ENCODE measurements at regions of chr19 and their contacts with region 1.

Region 1: DNA sequence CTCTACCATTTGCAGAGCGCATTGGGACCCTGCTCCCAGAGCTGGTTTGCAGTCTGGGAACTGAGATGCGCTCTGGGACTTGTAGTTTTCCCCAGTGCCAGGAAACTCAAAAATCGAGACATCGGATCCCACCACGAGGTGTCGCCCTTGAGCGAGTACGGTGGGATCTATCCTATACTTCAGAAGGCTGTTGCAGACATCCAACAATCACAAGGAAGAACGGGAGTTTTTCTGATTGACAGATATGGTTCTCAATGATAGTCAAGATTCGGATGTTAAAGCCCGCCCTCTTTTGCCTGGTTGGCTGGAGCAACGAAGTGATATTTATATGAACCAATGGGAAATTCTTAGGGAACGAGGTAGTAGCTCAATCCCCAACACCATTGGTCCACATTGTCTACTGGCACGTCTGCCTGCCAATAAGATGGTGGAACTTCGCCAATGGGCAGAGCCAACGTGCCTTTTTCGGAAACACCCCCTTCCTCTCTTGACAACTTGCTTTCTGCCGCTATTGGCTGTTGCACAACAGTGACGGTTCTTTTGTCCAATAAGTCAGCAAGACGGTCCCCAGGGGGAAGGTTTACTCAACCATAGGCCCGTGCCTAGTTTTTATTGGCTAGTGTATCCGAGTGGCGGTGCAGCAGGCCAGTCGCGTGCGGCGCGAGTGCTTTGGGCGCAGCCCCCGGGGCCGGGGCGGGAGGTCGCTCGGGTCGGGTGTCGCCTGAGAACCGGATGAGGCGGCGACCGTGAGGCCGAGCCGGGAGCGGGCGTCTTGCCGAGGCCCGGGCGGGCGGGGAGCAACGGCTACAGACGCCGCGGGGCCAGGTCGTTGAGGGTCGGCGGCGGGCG is at the start of gene DNM2:
- DNase-seq: peak; percentile 92 to 99 (median 98)
- H3K4me3 ChIP-seq: peak within 1 kb of the TSS; percentile 76
- H3K4me3 Mint-ChIP-seq: peak within 1 kb of the TSS; percentile 88 to 99 (median 95)
- H3K27ac ChIP-seq: peak within 1 kb of the TSS; percentile 90
- H3K27ac Mint-ChIP-seq: peak within 1 kb of the TSS; percentile 83 to 99 (median 96)
- H3K4me1 ChIP-seq: peaks cover 36% of the 10 kb centered on the region
- H3K4me1 Mint-ChIP-seq: peaks cover 31 to 46% (median 42%) of the 10 kb centered on the region in 3 donors
- H3K27me3 ChIP-seq: no peaks in the 10 kb centered on the region
- H3K27me3 Mint-ChIP-seq: no peaks in the 10 kb centered on the region
- total RNA-seq, gene DNM2: 154 to 165 TPM

Region 2: DNA sequence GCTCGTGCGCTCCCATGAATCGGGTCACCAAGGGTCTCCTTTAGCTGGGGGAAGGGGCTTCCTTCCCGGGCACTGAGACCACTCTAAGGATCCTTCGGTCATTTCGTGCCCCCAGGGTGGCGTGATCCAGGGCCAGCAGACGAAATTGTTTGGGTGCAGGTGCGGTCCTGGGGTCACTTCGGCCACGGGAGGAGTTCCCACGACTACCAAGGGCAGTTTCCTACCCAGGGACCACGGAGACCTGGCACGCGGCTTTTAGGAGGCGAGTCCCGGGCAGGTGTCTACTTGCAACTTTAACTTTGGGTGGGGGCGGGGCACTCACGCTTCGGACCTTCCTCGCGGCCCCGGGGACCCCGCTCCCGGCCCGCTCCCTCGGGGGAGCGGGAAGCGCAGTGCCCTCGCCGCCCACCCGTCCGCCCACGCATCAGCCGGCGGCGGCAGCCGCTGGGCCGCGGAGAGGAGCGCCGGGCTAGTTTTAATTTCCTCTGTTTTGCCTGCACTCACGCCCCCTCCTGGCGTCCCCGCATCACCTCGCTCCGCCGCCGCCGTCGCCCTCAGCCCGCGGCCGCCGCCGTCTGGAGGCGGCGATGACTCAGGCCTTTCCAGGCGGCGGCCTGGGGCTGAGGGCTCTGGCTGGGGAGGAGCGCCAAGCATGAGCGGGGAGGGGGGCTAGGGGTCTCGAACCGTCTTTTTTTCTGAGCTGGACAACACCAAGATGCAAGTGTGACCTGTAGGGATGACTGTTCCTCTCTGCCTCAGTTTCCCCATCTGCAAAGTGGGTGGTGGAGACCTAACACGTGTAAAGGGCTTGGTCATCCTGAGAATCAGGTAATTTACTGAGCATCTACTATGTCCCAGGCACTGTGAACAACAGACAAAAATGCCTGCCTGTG is 803.0 kb before region 1 on chr19:
- CTCF ChIA-PET with region 1: no interaction called
- POLR2A ChIA-PET with region 1: no interaction called
- DNase-seq: peak; percentile 67 to 85 (median 74)
- H3K4me3 ChIP-seq: peak overlapping the region; percentile 69
- H3K4me3 Mint-ChIP-seq: peak overlapping the region in 6 of 7 donors; percentile 59 to 78 (median 76)
- H3K27ac ChIP-seq: peak overlapping the region; percentile 31
- H3K27ac Mint-ChIP-seq: peak overlapping the region in 2 of 8 donors; percentile 47 to 77
- H3K4me1 ChIP-seq: peaks cover 7% of the 10 kb centered on the region
- H3K4me1 Mint-ChIP-seq: peaks cover 5 to 12% (median 9%) of the 10 kb centered on the region in 3 donors
- H3K27me3 ChIP-seq: no peaks in the 10 kb centered on the region
- H3K27me3 Mint-ChIP-seq: peaks cover 18 to 36% of the 10 kb centered on the region in 2 donors

Region 3: DNA sequence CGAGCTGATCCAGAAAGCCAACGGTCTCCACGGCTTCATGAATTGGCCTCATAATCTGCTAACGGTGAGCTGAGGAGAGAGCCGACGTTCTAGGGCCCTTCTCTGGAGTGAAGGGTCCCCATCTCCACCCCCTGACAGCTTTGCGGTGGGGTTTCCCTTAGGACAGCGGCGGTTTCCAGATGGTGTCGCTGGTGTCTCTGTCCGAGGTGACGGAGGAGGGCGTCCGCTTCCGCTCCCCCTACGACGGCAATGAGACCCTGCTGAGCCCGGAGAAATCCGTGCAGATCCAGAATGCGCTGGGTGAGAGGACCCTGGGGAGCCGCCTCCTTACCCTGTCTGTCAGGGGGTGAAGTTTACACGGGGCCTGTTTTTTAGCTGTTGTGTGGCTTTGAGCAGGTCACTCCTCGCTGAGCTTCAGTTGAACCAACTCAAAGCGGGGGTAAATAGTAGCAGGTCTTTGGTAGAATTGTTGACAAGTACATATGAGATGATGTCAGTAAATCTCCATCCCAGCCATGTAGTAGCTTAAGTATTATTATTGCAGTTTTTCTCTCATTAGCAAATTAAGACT is 15.5 kb before region 1 on chr19:
- CTCF ChIA-PET with region 1: interaction called, 65 read pairs
- POLR2A ChIA-PET with region 1: interaction called, 13 read pairs
- DNase-seq: peak in 1 of 5 donors; percentile 53
- H3K4me3 ChIP-seq: peak overlapping the region; percentile 93
- H3K4me3 Mint-ChIP-seq: peak overlapping the region; percentile 84 to 97 (median 94)
- H3K27ac ChIP-seq: peak overlapping the region; percentile 51
- H3K27ac Mint-ChIP-seq: peak overlapping the region; percentile 24 to 81 (median 62)
- H3K4me1 ChIP-seq: peaks cover 10% of the 10 kb centered on the region
- H3K4me1 Mint-ChIP-seq: peaks cover 12 to 14% (median 13%) of the 10 kb centered on the region in 3 donors
- H3K27me3 ChIP-seq: no peaks in the 10 kb centered on the region
- H3K27me3 Mint-ChIP-seq: peaks cover 2 to 7% of the 10 kb centered on the region in 2 donors

Region 4: GRCh38 chr19:10760273-10760944 is 42.8 kb after region 1 on chr19:
- CTCF ChIA-PET with region 1: interaction called, 33 read pairs
- POLR2A ChIA-PET with region 1: interaction called, 13 read pairs
- DNase-seq: peak in 3 of 5 donors; percentile 24 to 32 (median 29)
- H3K4me3 ChIP-seq: peak overlapping the region; percentile 28
- H3K4me3 Mint-ChIP-seq: peak overlapping the region; percentile 11 to 82 (median 73)
- H3K27ac ChIP-seq: peak overlapping the region; percentile 60
- H3K27ac Mint-ChIP-seq: peak overlapping the region; percentile 85 to 99 (median 95)
- H3K4me1 ChIP-seq: peaks cover 83% of the 10 kb centered on the region
- H3K4me1 Mint-ChIP-seq: peaks cover 70 to 88% (median 87%) of the 10 kb centered on the region in 3 donors
- H3K27me3 ChIP-seq: no peaks in the 10 kb centered on the region
- H3K27me3 Mint-ChIP-seq: no peaks in the 10 kb centered on the region

Region 5: DNA sequence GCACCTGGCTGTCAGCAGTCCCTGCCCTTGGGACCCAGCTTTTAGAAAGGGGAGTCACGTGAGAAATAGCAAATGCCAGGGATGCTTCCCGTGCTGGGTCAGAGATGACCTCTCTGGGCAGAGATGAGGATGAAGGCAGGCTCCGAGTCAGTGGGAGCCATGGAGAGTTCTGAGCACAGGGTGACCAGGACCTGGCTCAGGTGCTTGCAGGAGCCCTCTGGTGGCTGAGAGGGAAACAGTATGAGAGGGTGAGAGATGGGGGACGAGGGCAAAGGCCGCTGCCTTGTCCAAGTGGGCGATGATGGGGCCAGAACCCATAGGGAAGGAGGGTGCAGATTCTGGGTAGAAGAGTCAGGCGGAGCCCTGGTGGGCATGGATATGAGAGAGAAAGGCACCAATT is 102.6 kb after region 1 on chr19:
- CTCF ChIA-PET with region 1: interaction called, 21 read pairs
- POLR2A ChIA-PET with region 1: no interaction called
- DNase-seq: no peak
- H3K4me3 ChIP-seq: no peak overlapping the region
- H3K4me3 Mint-ChIP-seq: peak overlapping the region in 1 of 7 donors; percentile 49
- H3K27ac ChIP-seq: no peak overlapping the region
- H3K27ac Mint-ChIP-seq: peak overlapping the region in 7 of 8 donors; percentile 12 to 92 (median 76)
- H3K4me1 ChIP-seq: no peaks in the 10 kb centered on the region
- H3K4me1 Mint-ChIP-seq: peaks cover 2 to 5% (median 4%) of the 10 kb centered on the region in 3 donors
- H3K27me3 ChIP-seq: no peaks in the 10 kb centered on the region
- H3K27me3 Mint-ChIP-seq: no peaks in the 10 kb centered on the region

Region 6: DNA sequence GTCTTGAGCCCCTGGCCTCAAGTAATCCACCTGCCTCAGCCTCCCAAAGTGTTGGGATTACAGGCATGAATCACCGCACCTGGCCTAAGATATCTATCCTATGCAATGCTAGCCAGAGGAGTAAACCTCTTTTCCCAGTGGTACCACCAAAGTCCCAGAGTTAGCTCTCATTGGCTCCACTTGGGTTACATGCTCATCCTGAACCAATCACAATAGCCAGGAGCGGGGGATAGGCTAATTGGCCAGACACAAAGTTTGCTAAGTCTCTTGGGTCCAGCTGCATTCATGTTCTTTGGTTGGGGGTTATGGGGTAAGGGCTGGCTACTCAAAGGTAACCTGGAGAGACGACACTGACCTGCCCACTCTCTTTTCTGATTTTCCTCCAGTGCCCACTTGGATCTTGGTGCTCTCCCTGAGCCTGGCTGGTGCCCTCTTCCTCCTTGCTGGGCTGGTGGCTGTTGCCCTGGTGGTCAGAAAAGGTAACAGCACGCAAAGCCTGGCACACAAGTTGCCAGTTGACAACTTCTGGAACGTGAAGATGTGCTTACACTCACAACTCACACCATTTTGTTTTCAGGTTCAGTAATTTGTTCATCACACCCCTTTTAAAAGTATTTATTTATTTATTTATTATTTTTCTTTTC is 138.4 kb after region 1 on chr19:
- CTCF ChIA-PET with region 1: interaction called, 12 read pairs
- POLR2A ChIA-PET with region 1: no interaction called
- DNase-seq: no peak
- H3K4me3 ChIP-seq: no peak overlapping the region
- H3K4me3 Mint-ChIP-seq: no peak overlapping the region
- H3K27ac ChIP-seq: no peak overlapping the region
- H3K27ac Mint-ChIP-seq: peak overlapping the region in 1 of 8 donors; percentile 79
- H3K4me1 ChIP-seq: no peaks in the 10 kb centered on the region
- H3K4me1 Mint-ChIP-seq: peaks cover 0 to under 1% (median 0%) of the 10 kb centered on the region in 3 donors
- H3K27me3 ChIP-seq: no peaks in the 10 kb centered on the region
- H3K27me3 Mint-ChIP-seq: no peaks in the 10 kb centered on the region

Region 7: GRCh38 chr19:10870955-10871603 is 153.5 kb after region 1 on chr19 and contains the start of gene CARM1:
- CTCF ChIA-PET with region 1: interaction called, 97 read pairs
- POLR2A ChIA-PET with region 1: interaction called, 7 read pairs
- DNase-seq: peak; percentile 99
- H3K4me3 ChIP-seq: peak within 1 kb of the TSS; percentile 70
- H3K4me3 Mint-ChIP-seq: peak within 1 kb of the TSS; percentile 75 to 95 (median 83)
- H3K27ac ChIP-seq: peak within 1 kb of the TSS; percentile 57
- H3K27ac Mint-ChIP-seq: peak within 1 kb of the TSS; percentile 47 to 95 (median 84)
- H3K4me1 ChIP-seq: peaks cover 16% of the 10 kb centered on the region
- H3K4me1 Mint-ChIP-seq: peaks cover 11 to 26% (median 17%) of the 10 kb centered on the region in 3 donors
- H3K27me3 ChIP-seq: no peaks in the 10 kb centered on the region
- H3K27me3 Mint-ChIP-seq: peaks cover 0 to 1% of the 10 kb centered on the region in 2 donors
- total RNA-seq, gene CARM1: 69.2 to 71.3 TPM

Region 8: DNA sequence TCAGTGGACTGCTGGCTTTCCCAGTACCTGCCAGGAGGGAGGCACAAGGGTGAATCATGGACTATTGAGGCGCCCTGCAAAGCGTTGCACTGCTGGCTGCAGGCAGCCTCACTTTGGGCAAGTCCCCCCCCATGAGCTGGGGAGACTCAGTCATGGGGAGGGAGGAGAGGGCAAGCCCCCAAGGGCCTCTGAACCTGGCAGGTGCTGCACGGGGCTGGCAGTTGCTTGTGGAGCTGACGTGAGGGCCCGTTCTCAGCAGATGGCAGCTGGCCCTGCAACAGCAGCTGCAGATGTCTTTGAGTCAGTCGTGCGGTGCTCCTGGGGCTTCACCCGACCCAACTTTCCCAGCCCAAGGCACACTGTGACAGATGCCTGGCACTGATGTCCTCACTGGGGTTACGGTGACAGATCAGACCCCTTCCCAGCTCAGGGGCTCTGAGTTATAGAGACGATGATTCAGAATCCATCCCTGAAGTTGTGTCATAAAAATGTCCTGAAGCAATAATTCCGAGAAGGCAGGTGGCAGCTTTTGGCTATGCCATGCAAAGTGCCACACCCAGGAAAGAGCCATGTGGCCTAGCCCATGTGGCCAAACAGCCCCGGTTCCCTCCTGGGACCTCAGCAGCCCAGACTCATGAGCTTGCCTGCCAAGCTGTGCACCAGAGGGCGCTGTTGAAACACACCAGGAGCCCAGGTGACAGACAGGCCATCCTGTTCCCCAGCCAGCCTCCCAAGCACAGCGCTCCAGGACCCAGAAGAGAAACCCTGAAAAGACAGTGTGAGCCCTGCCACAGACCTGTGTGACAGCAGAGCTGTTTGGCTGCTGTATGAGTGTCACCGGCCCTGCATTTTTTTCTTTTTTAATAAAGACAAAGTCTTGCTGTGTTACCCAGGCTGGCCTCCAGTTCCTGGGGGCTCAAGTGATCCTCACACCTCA is 318.1 kb after region 1 on chr19:
- CTCF ChIA-PET with region 1: no interaction called
- POLR2A ChIA-PET with region 1: no interaction called
- DNase-seq: peak; percentile 67 to 90 (median 77)
- H3K4me3 ChIP-seq: no peak overlapping the region
- H3K4me3 Mint-ChIP-seq: no peak overlapping the region
- H3K27ac ChIP-seq: no peak overlapping the region
- H3K27ac Mint-ChIP-seq: peak overlapping the region in 7 of 8 donors; percentile 51 to 69 (median 62)
- H3K4me1 ChIP-seq: peaks cover 4% of the 10 kb centered on the region
- H3K4me1 Mint-ChIP-seq: peaks cover 5 to 8% (median 6%) of the 10 kb centered on the region in 3 donors
- H3K27me3 ChIP-seq: no peaks in the 10 kb centered on the region
- H3K27me3 Mint-ChIP-seq: no peaks in the 10 kb centered on the region

Measured in CD8-positive, alpha-beta memory T cell (primary cell).